ENCODE measurements at regions of chr7 and their contacts with region 1.

Region 1: GRCh38 chr7:129210256-129210988 is 14.4 kb upstream of the AHCYL2 start:
- DNase-seq: peak; percentile 30 to 72 (median 52)
- ATAC-seq: peak; percentile 68
- H3K4me3 ChIP-seq: no peak overlapping the region
- H3K4me3 Mint-ChIP-seq: no peak overlapping the region
- H3K27ac ChIP-seq: no peak overlapping the region
- H3K27ac Mint-ChIP-seq: no peak overlapping the region
- H3K4me1 ChIP-seq: peaks cover 4% of the 10 kb centered on the region
- H3K4me1 Mint-ChIP-seq: no peaks in the 10 kb centered on the region
- H3K27me3 ChIP-seq: no peaks in the 10 kb centered on the region
- H3K27me3 Mint-ChIP-seq: no peaks in the 10 kb centered on the region
- CTCF ChIP-seq: peak; percentile 68

Region 2: GRCh38 chr7:128904381-128905197 is 305.8 kb before region 1 on chr7:
- CTCF ChIA-PET with region 1: no interaction called
- POLR2A ChIA-PET with region 1: no interaction called
- intact Hi-C with region 1: loop called in 1 of 2 experiments (anchors 5 kb)
- DNase-seq: peak in 4 of 14 experiments; percentile 28 to 79 (median 75)
- ATAC-seq: peak; percentile 78
- H3K4me3 ChIP-seq: no peak overlapping the region
- H3K4me3 Mint-ChIP-seq: no peak overlapping the region
- H3K27ac ChIP-seq: no peak overlapping the region
- H3K27ac Mint-ChIP-seq: no peak overlapping the region
- H3K4me1 ChIP-seq: peaks cover 7% of the 10 kb centered on the region
- H3K4me1 Mint-ChIP-seq: no peaks in the 10 kb centered on the region
- H3K27me3 ChIP-seq: peaks cover 8% of the 10 kb centered on the region in 2 experiments
- H3K27me3 Mint-ChIP-seq: peaks cover 56% of the 10 kb centered on the region
- CTCF ChIP-seq: peak; percentile 65

Region 3: GRCh38 chr7:129163875-129164544 is 46.4 kb before region 1 on chr7:
- CTCF ChIA-PET with region 1: interaction called, 4 read pairs
- POLR2A ChIA-PET with region 1: no interaction called
- intact Hi-C with region 1: loop called in 1 of 2 experiments (anchors 1 kb)
- DNase-seq: peak in 4 of 14 experiments; percentile 21 to 70 (median 54)
- ATAC-seq: peak; percentile 65
- H3K4me3 ChIP-seq: no peak overlapping the region
- H3K4me3 Mint-ChIP-seq: no peak overlapping the region
- H3K27ac ChIP-seq: no peak overlapping the region
- H3K27ac Mint-ChIP-seq: no peak overlapping the region
- H3K4me1 ChIP-seq: peaks cover 4% of the 10 kb centered on the region
- H3K4me1 Mint-ChIP-seq: peaks cover 6% of the 10 kb centered on the region
- H3K27me3 ChIP-seq: no peaks in the 10 kb centered on the region
- H3K27me3 Mint-ChIP-seq: peaks cover 7% of the 10 kb centered on the region
- CTCF ChIP-seq: peak; percentile 88